ENCODE measurements at regions of chr9 and their contacts with region 1.

Region 1: DNA sequence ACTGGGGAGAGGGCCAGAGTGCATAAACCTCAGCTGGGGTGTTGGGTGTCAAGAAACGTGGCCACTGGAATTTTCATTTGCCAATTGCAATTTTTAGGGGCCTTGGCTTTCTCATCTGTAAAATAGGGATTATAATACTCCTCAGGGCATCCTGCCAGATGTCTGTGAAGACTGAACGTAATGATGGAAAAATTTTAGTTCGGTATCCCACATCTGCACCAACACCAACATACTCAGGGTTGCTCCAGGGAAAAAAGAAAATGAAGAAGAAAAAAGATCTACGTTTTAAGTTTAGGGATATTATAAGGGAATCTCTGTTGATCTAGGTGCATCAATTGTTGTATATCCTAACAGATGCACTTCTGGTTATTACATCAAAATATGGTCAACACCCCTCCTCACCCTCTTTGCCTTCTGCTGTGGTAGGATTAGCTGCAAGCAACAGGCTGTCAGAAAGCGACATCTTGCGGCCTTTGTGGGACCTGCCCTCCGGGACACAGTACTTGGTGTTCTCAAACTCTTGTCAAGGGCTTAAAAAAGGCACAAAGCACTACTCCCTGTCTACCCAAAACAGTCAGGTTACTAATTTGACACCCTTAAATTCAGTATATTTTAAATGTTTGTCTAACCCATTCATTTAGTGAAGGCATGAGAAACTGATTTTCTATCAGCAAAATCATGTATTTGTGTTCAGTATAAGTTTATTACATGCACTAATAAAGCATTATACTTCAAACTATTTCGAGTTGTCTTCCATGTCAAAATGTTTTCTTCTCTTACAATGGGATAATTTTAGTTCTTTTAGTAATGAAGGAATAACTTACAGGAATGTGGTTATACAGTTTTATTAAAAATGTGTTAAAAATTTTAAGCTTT is 8.3 kb upstream of the TBC1D2 start:
- DNase-seq: peak; percentile 71
- H3K4me3 Mint-ChIP-seq: no peak overlapping the region
- H3K27ac Mint-ChIP-seq: no peak overlapping the region
- H3K4me1 Mint-ChIP-seq: no peaks in the 10 kb centered on the region
- H3K27me3 Mint-ChIP-seq: peaks cover 20% of the 10 kb centered on the region

Region 2: DNA sequence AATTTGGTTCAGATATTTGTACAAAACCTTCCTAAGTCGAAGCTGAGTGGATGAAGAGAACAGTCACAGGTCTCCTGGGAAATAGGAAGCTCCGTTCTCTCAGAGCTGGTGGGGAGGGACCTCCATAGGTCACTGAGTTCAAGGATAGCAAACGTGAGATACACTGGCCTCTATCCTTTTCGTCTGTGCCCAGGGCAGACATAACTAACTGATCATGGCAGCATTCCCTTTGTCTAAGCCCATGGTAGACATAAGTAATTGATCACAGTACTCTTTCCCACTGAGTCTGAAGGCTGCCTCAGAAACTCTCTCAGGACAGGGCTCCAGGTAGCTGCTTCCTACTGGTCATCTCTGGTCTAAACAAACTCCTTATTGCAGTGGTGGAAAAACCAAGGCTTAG is 59.0 kb before region 1 on chr9:
- intact Hi-C with region 1: loop called (anchors 1 kb)
- DNase-seq: no peak
- H3K4me3 Mint-ChIP-seq: no peak overlapping the region
- H3K27ac Mint-ChIP-seq: no peak overlapping the region
- H3K4me1 Mint-ChIP-seq: no peaks in the 10 kb centered on the region
- H3K27me3 Mint-ChIP-seq: no peaks in the 10 kb centered on the region

Region 3: GRCh38 chr9:98248737-98249474 is 14.8 kb before region 1 on chr9:
- intact Hi-C with region 1: no loop called
- DNase-seq: no peak
- H3K4me3 Mint-ChIP-seq: no peak overlapping the region
- H3K27ac Mint-ChIP-seq: peak overlapping the region; percentile 69
- H3K4me1 Mint-ChIP-seq: peaks cover 19% of the 10 kb centered on the region
- H3K27me3 Mint-ChIP-seq: peaks cover 6% of the 10 kb centered on the region

Measured in activated T-helper 2 cell treated with anti-CD3 and anti-CD28 coated beads, Interferon-gamma antibody, Interleukin-2, Interleukin-4, amounts not matched to agents 10 μg/mL and 5 μg/mL and 100 μg/mL, durations not matched to agents 14 hours and 24 hours and 36 hours (primary cell).